Mammary epithelial cell (primary cell): ENCODE measurements at regions of chr4 and their contacts with region 1.

Region 1: GRCh38 chr4:77473509-77473908 is 132.1 kb upstream of the CXCL13 start:
- DNase-seq: no peak
- H3K4me3 ChIP-seq: no peak overlapping the region
- H3K27ac ChIP-seq: no peak overlapping the region
- H3K4me1 ChIP-seq: peaks cover 10% of the 10 kb centered on the region
- H3K27me3 ChIP-seq: peaks cover 1% of the 10 kb centered on the region
- CTCF ChIP-seq: peak; percentile 39 to 60

Region 2: GRCh38 chr4:77007358-77008191 is 465.9 kb before region 1 on chr4:
- CTCF ChIA-PET with region 1: no interaction called
- dilution Hi-C with region 1: no loop called
- in situ Hi-C with region 1: no loop called
- intact Hi-C with region 1: no loop called
- DNase-seq: peak; percentile 64
- H3K4me3 ChIP-seq: no peak overlapping the region
- H3K27ac ChIP-seq: no peak overlapping the region
- H3K4me1 ChIP-seq: peaks cover 11% of the 10 kb centered on the region
- H3K27me3 ChIP-seq: no peaks in the 10 kb centered on the region
- CTCF ChIP-seq: no peak

Region 3: GRCh38 chr4:77240469-77241066 is 232.9 kb before region 1 on chr4:
- CTCF ChIA-PET with region 1: no interaction called
- dilution Hi-C with region 1: no loop called
- in situ Hi-C with region 1: no loop called
- intact Hi-C with region 1: no loop called
- DNase-seq: peak; percentile 28
- H3K4me3 ChIP-seq: no peak overlapping the region
- H3K27ac ChIP-seq: no peak overlapping the region
- H3K4me1 ChIP-seq: no peaks in the 10 kb centered on the region
- H3K27me3 ChIP-seq: no peaks in the 10 kb centered on the region
- CTCF ChIP-seq: peak; percentile 91 to 93

Region 4: GRCh38 chr4:77418333-77419038 is 55.0 kb before region 1 on chr4:
- CTCF ChIA-PET with region 1: no interaction called
- dilution Hi-C with region 1: loop called (anchors 5 kb)
- in situ Hi-C with region 1: no loop called
- intact Hi-C with region 1: no loop called
- DNase-seq: peak; percentile 21
- H3K4me3 ChIP-seq: no peak overlapping the region
- H3K27ac ChIP-seq: no peak overlapping the region
- H3K4me1 ChIP-seq: no peaks in the 10 kb centered on the region
- H3K27me3 ChIP-seq: no peaks in the 10 kb centered on the region
- CTCF ChIP-seq: peak; percentile 43 to 56

Region 5: GRCh38 chr4:77488882-77489281 is 15.4 kb after region 1 on chr4:
- CTCF ChIA-PET with region 1: no interaction called
- dilution Hi-C with region 1: no loop called
- in situ Hi-C with region 1: no loop called
- intact Hi-C with region 1: no loop called
- DNase-seq: no peak
- H3K4me3 ChIP-seq: no peak overlapping the region
- H3K27ac ChIP-seq: no peak overlapping the region
- H3K4me1 ChIP-seq: peaks cover 7% of the 10 kb centered on the region
- H3K27me3 ChIP-seq: peaks cover 3% of the 10 kb centered on the region
- CTCF ChIP-seq: no peak

Region 6: GRCh38 chr4:77538560-77539157 is 65.2 kb after region 1 on chr4:
- CTCF ChIA-PET with region 1: no interaction called
- dilution Hi-C with region 1: no loop called
- in situ Hi-C with region 1: no loop called
- intact Hi-C with region 1: loop called (anchors 5 kb)
- DNase-seq: peak; percentile 71
- H3K4me3 ChIP-seq: no peak overlapping the region
- H3K27ac ChIP-seq: peak overlapping the region; percentile 36
- H3K4me1 ChIP-seq: peaks cover 21% of the 10 kb centered on the region
- H3K27me3 ChIP-seq: peaks cover 8% of the 10 kb centered on the region
- CTCF ChIP-seq: no peak